CD14-positive monocyte (primary cell): ENCODE measurements at regions of chr15 and their contacts with region 1.

Region 1: DNA sequence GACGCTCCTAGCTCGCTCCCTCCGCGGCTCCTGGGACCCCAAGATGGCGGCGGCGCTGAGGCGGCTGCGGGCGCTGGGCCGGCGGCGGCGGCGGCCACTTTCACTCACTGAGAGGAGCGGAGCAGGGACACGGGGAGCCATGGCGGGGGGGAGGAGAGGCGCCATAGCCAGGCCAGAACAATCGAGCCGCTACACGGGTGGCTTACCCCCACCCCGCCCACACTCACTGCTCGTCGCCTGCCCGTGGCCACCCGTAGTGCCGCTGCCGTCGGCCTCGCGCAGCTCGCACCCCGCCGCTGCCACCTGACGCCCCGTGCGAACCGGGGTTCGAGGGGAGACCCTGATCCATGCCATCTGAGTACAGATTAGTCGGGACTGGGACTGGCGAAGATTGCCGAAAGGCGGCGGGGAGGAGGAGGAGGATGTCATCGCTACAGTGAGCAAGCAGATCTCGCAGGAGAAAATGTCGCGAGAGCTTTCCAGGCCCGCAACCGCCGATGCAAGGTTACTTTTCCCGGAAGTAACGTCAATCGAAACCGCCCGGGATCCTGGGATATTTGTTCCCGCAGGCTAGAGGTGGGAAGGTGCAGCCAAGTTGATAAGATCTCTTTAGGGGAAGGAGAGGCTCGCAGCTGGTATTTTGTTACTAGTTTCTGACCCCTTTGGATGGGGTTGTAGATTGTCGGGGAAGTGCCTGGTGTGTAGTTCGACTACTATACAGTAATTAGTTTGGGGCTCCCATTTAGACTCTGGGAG is at the start of gene INO80:
- DNase-seq: peak; percentile 95 to 99 (median 97)
- H3K4me3 ChIP-seq: peak within 1 kb of the TSS; percentile 58 to 96 (median 96)
- H3K4me3 Mint-ChIP-seq: peak within 1 kb of the TSS; percentile 92 to 99
- H3K27ac ChIP-seq: peak within 1 kb of the TSS; percentile 87 to 96
- H3K27ac Mint-ChIP-seq: peak within 1 kb of the TSS; percentile 98 to 100 (median 99)
- H3K4me1 ChIP-seq: peaks cover 14 to 19% of the 10 kb centered on the region in 2 donors
- H3K4me1 Mint-ChIP-seq: peaks cover 23% of the 10 kb centered on the region
- H3K27me3 ChIP-seq: peaks cover 0 to 2% of the 10 kb centered on the region in 2 donors
- H3K27me3 Mint-ChIP-seq: peaks cover 0 to 3% (median 3%) of the 10 kb centered on the region in 3 donors
- CTCF ChIP-seq: no peak
- polyA plus RNA-seq, gene INO80: 2.3 to 13.1 (median 2.4) TPM

Region 2: DNA sequence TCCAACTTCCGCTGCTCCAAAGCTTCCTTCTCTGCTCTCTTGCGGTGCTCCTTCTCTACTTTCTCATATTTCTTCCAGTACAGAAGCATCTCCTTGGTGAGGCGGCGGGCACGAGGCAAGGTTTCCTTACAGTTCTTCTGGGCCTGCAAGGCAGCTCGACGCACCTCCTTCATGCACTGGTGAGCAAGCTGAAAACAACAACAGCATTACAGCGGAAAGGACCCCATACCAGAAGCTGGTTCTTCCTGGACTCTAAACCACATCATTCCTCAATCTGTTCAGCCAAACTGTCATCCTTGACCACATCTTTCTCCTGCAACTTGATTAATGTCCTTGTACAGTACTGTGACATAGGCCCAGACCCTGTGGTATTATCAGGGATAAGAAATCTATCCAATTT is 36.6 kb before region 1 on chr15:
- intact Hi-C with region 1: no loop called
- DNase-seq: no peak
- H3K4me3 ChIP-seq: no peak overlapping the region
- H3K4me3 Mint-ChIP-seq: no peak overlapping the region
- H3K27ac ChIP-seq: peak overlapping the region in 1 of 2 donors; percentile 22
- H3K27ac Mint-ChIP-seq: peak overlapping the region in 1 of 7 donors; percentile 3
- H3K4me1 ChIP-seq: no peaks in the 10 kb centered on the region
- H3K4me1 Mint-ChIP-seq: peaks cover 3% of the 10 kb centered on the region
- H3K27me3 ChIP-seq: no peaks in the 10 kb centered on the region
- H3K27me3 Mint-ChIP-seq: peaks cover 0 to 2% (median 0%) of the 10 kb centered on the region in 3 donors
- CTCF ChIP-seq: no peak

Region 3: GRCh38 chr15:41230650-41231533 is 114.6 kb after region 1 on chr15 and contains the starts of genes CHP1 and EXD1:
- intact Hi-C with region 1: loop called (anchors 5 kb)
- DNase-seq: peak; percentile 96 to 98 (median 96)
- H3K4me3 ChIP-seq: peak within 1 kb of the TSS; percentile 80 to 96 (median 94)
- H3K4me3 Mint-ChIP-seq: peak within 1 kb of the TSS; percentile 91 to 94
- H3K27ac ChIP-seq: peak within 1 kb of the TSS; percentile 80 to 99
- H3K27ac Mint-ChIP-seq: peak within 1 kb of the TSS; percentile 93 to 99 (median 96)
- H3K4me1 ChIP-seq: peaks cover 23 to 29% of the 10 kb centered on the region in 2 donors
- H3K4me1 Mint-ChIP-seq: peaks cover 30% of the 10 kb centered on the region
- H3K27me3 ChIP-seq: no peaks in the 10 kb centered on the region
- H3K27me3 Mint-ChIP-seq: peaks cover 2 to 5% (median 5%) of the 10 kb centered on the region in 3 donors
- CTCF ChIP-seq: peak; percentile 100
- polyA plus RNA-seq, gene CHP1: 57.2 to 67.2 (median 58.8) TPM
- polyA plus RNA-seq, gene EXD1: 0.04 to 0.08 TPM in 2 of 3 donors, not detected in the other

Region 4: GRCh38 chr15:41411031-41411430 is 294.7 kb after region 1 on chr15:
- intact Hi-C with region 1: loop called in 1 of 2 experiments (anchors 5 kb)
- DNase-seq: no peak
- H3K4me3 ChIP-seq: no peak overlapping the region
- H3K4me3 Mint-ChIP-seq: no peak overlapping the region
- H3K27ac ChIP-seq: peak overlapping the region in 1 of 2 donors; percentile 77
- H3K27ac Mint-ChIP-seq: peak overlapping the region in 6 of 7 donors; percentile 76 to 97 (median 82)
- H3K4me1 ChIP-seq: peaks cover 46 to 47% of the 10 kb centered on the region in 2 donors
- H3K4me1 Mint-ChIP-seq: peaks cover 39% of the 10 kb centered on the region
- H3K27me3 ChIP-seq: no peaks in the 10 kb centered on the region
- H3K27me3 Mint-ChIP-seq: peaks cover 0 to 2% (median 0%) of the 10 kb centered on the region in 3 donors
- CTCF ChIP-seq: no peak